ENCODE measurements at regions of chr9 and their contacts with region 1.

Region 1: GRCh38 chr9:110623462-110624025 is 44.0 kb upstream of the SVEP1 start:
- DNase-seq: no peak

Region 2: GRCh38 chr9:110452227-110452801 is 171.2 kb before region 1 on chr9:
- intact Hi-C with region 1: loop called in 1 of 2 experiments (anchors 10 kb)
- DNase-seq: no peak

Region 3: GRCh38 chr9:110555551-110556331 is 67.8 kb before region 1 on chr9:
- intact Hi-C with region 1: no loop called
- DNase-seq: no peak